A673 (cell line): ENCODE measurements at regions of chr20 and their contacts with region 1.

Region 1: GRCh38 chr20:17431621-17432364 is 99.4 kb downstream of the BFSP1 start:
- DNase-seq: peak; percentile 81
- H3K4me3 ChIP-seq: no peak overlapping the region
- H3K27ac ChIP-seq: peak overlapping the region; percentile 51
- H3K4me1 ChIP-seq: peaks cover 42% of the 10 kb centered on the region
- H3K27me3 ChIP-seq: no peaks in the 10 kb centered on the region
- CTCF ChIP-seq: peak; percentile 96

Region 2: GRCh38 chr20:17227669-17228623 is 203.8 kb before region 1 on chr20:
- CTCF ChIA-PET with region 1: no interaction called
- POLR2A ChIA-PET with region 1: no interaction called
- intact Hi-C with region 1: loop called (anchors 2 kb)
- DNase-seq: peak; percentile 86
- H3K4me3 ChIP-seq: peak overlapping the region; percentile 78
- H3K27ac ChIP-seq: peak overlapping the region; percentile 79
- H3K4me1 ChIP-seq: peaks cover 29% of the 10 kb centered on the region
- H3K27me3 ChIP-seq: no peaks in the 10 kb centered on the region
- CTCF ChIP-seq: no peak

Region 3: DNA sequence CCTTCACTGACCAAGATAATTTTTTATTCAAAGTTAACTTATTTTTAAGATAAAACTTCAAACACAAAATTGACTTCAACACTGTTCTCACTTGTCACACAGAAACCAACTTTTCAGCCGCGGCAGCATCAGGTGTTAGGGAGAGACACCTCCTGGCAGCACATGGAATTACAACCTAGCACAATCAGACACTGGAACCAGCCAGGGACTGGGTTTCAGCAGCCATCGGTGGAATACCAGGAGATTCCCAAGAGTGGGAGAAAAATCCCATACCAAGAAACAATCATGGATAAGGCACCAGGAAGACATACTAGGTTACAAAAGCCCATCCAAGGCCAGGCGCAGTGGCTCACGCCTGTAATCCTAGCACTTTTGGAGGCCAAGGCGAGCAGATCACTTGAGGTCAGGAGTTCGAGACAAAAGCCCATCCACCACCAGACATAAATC is 466.8 kb after region 1 on chr20:
- CTCF ChIA-PET with region 1: no interaction called
- POLR2A ChIA-PET with region 1: no interaction called
- intact Hi-C with region 1: no loop called
- DNase-seq: peak; percentile 73
- H3K4me3 ChIP-seq: no peak overlapping the region
- H3K27ac ChIP-seq: no peak overlapping the region
- H3K4me1 ChIP-seq: peaks cover 7% of the 10 kb centered on the region
- H3K27me3 ChIP-seq: no peaks in the 10 kb centered on the region
- CTCF ChIP-seq: peak; percentile 88